ENCODE measurements at regions of chr7 and their contacts with region 1.

Region 1: DNA sequence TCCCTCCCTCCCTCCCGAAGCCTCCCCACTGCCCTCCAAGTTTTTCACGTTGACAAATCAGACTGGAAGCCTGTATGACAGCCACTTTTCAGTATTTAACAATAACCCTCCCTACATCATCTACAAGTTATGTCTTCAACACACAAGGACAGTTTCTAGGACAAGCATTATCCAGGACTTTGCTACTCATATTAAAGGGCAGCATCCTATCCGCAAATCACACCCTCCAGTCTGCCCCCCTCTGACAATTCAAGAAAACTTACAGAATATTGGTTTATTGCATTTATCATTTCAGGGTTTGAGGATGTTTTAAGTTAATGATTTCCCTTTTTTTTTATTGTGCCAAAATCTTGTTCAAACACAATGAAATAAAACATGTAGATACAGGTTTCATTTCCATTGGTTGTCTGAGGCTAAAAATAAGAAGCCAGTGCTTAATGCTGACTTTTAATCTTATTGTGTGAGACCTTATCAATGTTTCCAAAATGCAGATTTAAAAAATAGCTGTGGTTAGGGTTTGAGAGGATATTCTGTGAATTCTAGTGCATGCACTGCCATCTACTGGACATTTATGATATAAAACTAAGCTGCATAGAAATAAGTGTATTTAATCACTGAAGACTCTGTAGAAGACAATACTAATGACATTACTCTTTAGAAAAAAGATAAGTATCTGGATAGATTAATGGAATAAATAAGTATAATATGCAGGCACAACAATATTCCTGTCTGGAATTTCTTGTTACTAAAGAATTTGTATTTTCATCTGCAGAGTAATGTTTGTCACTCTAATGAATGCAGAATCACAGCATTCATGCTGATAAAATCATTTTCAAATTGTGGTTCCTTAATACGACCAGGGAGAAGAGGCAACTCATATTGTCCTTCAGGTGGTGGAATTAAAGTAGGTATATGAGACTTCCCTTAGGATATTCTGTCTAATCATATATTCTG is 64.1 kb downstream of the CAV1 start:
- DNase-seq: peak in 4 of 5 donors; percentile 17 to 38 (median 32)
- H3K4me3 ChIP-seq: no peak overlapping the region
- H3K4me3 Mint-ChIP-seq: no peak overlapping the region
- H3K27ac ChIP-seq: no peak overlapping the region
- H3K27ac Mint-ChIP-seq: no peak overlapping the region
- H3K4me1 ChIP-seq: peaks cover 6% of the 10 kb centered on the region
- H3K4me1 Mint-ChIP-seq: peaks cover 10 to 22% (median 16%) of the 10 kb centered on the region in 4 donors
- H3K27me3 ChIP-seq: peaks cover 9% of the 10 kb centered on the region
- H3K27me3 Mint-ChIP-seq: peaks cover 17 to 22% of the 10 kb centered on the region in 2 donors

Region 2: DNA sequence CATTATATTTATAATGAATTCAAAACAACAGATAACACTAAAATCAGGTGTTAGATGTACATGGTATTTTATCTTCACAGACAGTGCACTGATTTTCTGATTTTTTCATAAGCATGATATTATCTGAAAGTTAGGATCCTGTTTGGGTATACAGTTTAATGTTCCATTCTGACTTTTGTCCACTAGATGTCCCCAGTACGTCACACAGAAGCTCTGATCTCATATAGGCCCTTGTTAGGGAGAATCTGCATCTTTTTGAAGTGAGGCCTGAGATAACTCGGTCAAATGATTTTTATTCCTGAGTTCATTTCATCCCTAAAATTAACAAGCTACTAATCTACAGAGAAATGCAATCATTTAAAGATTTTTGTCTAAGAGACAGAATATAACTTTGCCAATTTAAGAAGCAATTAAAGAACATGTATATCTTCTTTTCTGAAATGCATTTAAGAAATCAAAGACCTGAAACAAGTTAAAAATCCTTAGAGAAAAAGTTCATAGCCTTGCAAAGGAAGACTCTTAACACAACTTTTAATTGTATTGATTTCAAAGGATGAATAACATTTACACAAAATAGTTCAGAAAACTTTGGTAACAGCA is 450.6 kb before region 1 on chr7:
- CTCF ChIA-PET with region 1: interaction called, 8 read pairs
- POLR2A ChIA-PET with region 1: no interaction called
- intact Hi-C with region 1: loop called (anchors 1 kb)
- DNase-seq: peak in 4 of 5 donors; percentile 31 to 40 (median 34)
- H3K4me3 ChIP-seq: no peak overlapping the region
- H3K4me3 Mint-ChIP-seq: no peak overlapping the region
- H3K27ac ChIP-seq: no peak overlapping the region
- H3K27ac Mint-ChIP-seq: no peak overlapping the region
- H3K4me1 ChIP-seq: peaks cover 3% of the 10 kb centered on the region
- H3K4me1 Mint-ChIP-seq: peaks cover 5 to 10% (median 6%) of the 10 kb centered on the region in 4 donors
- H3K27me3 ChIP-seq: no peaks in the 10 kb centered on the region
- H3K27me3 Mint-ChIP-seq: peaks cover 2 to 7% of the 10 kb centered on the region in 2 donors

Region 3: DNA sequence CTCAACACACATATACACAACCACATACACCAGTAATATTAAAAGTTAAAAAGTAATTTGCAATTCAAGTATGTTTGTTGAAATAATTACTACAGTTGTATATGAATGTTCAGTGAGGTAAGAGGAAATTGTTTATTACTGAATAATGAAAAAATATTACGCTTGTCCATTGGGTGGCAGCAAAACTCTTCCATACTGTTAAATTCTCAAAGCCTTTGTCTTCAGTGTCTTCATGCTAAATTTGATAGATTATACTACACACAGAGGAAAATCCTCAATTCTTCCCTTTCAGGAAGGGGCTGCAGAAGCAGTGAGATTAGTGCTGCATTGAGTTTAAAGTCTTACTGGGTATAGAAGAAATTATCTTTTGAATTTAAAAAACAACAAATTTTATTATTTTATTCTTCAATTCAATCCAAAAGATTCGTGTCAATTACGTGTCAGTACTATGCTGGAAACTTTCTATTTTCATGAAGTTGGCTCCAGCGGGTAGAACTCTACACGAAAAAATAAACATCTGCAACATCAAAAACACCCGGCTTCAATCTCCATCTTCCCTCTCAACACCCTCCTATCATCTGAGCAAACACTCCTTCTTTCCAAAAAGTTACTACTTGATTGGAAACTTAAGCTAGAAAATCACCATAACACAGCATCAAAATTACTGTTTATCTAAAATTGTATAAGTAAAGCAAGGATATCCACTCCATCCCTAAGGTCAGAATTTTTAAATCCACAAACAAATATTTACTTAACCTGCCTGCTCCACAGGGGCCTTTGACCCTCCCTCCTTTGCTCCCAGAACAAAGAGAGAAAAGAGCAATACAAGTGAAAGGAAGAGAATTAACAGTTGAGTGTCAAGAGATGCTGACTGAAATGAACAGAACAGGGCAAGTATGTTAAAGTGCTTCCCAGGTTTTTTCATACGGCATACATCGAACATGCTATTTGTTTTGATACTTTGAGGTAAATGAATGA is 415.6 kb before region 1 on chr7:
- CTCF ChIA-PET with region 1: interaction called, 61 read pairs
- POLR2A ChIA-PET with region 1: no interaction called
- intact Hi-C with region 1: loop called (anchors 1 kb)
- DNase-seq: peak in 4 of 5 donors; percentile 52 to 65 (median 60)
- H3K4me3 ChIP-seq: no peak overlapping the region
- H3K4me3 Mint-ChIP-seq: no peak overlapping the region
- H3K27ac ChIP-seq: no peak overlapping the region
- H3K27ac Mint-ChIP-seq: no peak overlapping the region
- H3K4me1 ChIP-seq: no peaks in the 10 kb centered on the region
- H3K4me1 Mint-ChIP-seq: no peaks in the 10 kb centered on the region
- H3K27me3 ChIP-seq: no peaks in the 10 kb centered on the region
- H3K27me3 Mint-ChIP-seq: peaks cover 10 to 11% of the 10 kb centered on the region in 2 donors

Region 4: GRCh38 chr7:116525913-116526861 is 62.7 kb before region 1 on chr7:
- CTCF ChIA-PET with region 1: interaction called, 21 read pairs
- POLR2A ChIA-PET with region 1: no interaction called
- intact Hi-C with region 1: loop called (anchors 5 kb)
- DNase-seq: peak; percentile 50 to 67 (median 63)
- H3K4me3 ChIP-seq: peak overlapping the region in 1 of 2 donors; percentile 35
- H3K4me3 Mint-ChIP-seq: peak overlapping the region; percentile 80 to 94 (median 87)
- H3K27ac ChIP-seq: no peak overlapping the region
- H3K27ac Mint-ChIP-seq: no peak overlapping the region
- H3K4me1 ChIP-seq: peaks cover 22% of the 10 kb centered on the region
- H3K4me1 Mint-ChIP-seq: peaks cover 12 to 30% (median 22%) of the 10 kb centered on the region in 4 donors
- H3K27me3 ChIP-seq: peaks cover 29% of the 10 kb centered on the region
- H3K27me3 Mint-ChIP-seq: peaks cover 53 to 60% of the 10 kb centered on the region in 2 donors

Region 5: DNA sequence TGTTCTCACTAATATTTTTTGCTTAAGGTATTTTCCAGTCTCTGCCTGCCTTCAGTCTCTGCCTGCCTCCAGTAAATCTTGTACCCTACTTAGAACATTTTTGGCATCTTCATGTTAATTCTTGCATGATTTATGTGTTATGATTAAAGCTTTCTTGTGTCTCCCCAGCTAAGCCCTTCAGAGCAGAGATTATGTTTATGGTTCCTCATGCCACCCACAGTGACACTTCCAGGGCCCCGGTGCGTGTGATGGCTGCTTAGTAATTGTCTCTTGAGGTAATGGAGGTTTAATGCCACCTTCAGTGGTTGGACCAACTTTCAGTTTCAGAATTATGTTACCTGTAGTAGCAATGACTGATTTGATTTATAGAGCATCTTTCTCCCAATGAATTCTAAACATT is 12.5 kb after region 1 on chr7:
- CTCF ChIA-PET with region 1: interaction called, 30 read pairs
- POLR2A ChIA-PET with region 1: interaction called, 3 read pairs
- intact Hi-C with region 1: no loop called
- DNase-seq: no peak
- H3K4me3 ChIP-seq: no peak overlapping the region
- H3K4me3 Mint-ChIP-seq: no peak overlapping the region
- H3K27ac ChIP-seq: no peak overlapping the region
- H3K27ac Mint-ChIP-seq: no peak overlapping the region
- H3K4me1 ChIP-seq: no peaks in the 10 kb centered on the region
- H3K4me1 Mint-ChIP-seq: peaks cover 0 to 7% (median 4%) of the 10 kb centered on the region in 4 donors
- H3K27me3 ChIP-seq: no peaks in the 10 kb centered on the region
- H3K27me3 Mint-ChIP-seq: peaks cover 7 to 12% of the 10 kb centered on the region in 2 donors

Region 6: DNA sequence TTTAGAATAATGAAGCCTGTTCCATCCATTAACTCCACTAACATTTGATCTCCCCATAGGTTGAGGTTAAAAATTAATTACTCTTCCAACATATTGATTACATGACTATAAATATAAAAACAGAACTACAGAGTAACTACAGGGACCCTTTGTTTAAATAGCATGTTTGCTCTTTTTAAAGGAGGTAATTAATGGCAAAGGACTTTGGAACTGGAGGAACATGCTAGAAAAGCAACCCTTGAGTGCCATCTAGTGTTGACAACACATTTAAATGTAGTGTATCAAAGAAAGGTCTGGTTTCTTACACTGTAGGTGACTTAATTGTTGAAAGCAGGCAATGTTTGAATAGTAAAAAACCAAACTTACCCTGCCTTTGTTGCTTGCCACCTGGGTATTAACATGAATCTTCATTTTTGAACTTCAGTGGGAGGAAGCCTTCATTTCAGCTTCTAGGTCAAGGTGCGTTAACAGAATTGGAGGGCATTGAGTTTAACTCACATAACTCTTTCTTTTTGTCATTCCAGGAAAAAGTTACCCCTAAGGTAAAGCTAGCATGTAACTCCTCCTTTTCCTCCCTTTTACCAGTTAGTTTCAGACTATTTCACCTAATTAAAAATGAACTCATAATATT is 220.8 kb after region 1 on chr7:
- CTCF ChIA-PET with region 1: interaction called, 4 read pairs
- POLR2A ChIA-PET with region 1: no interaction called
- intact Hi-C with region 1: loop called (anchors 1 kb)
- DNase-seq: peak in 4 of 5 donors; percentile 16 to 34 (median 25)
- H3K4me3 ChIP-seq: no peak overlapping the region
- H3K4me3 Mint-ChIP-seq: no peak overlapping the region
- H3K27ac ChIP-seq: no peak overlapping the region
- H3K27ac Mint-ChIP-seq: no peak overlapping the region
- H3K4me1 ChIP-seq: no peaks in the 10 kb centered on the region
- H3K4me1 Mint-ChIP-seq: no peaks in the 10 kb centered on the region
- H3K27me3 ChIP-seq: no peaks in the 10 kb centered on the region
- H3K27me3 Mint-ChIP-seq: no peaks in the 10 kb centered on the region